H1 (cell line): ENCODE measurements at regions of chr7 and their contacts with region 1.

Region 1: GRCh38 chr7:71854546-71855397 is 557.4 kb downstream of the CALN1 start:
- DNase-seq: no peak
- H3K4me3 ChIP-seq: no peak overlapping the region
- H3K27ac ChIP-seq: no peak overlapping the region
- H3K4me1 ChIP-seq: no peaks in the 10 kb centered on the region; a peak in 1 of 7 replicates
- H3K27me3 ChIP-seq: no peaks in the 10 kb centered on the region; a peak in 1 of 7 replicates
- CTCF ChIP-seq: no peak
- EP300 ChIP-seq: no peak
- POLR2A ChIP-seq: no peak
- RAD21 ChIP-seq: no peak

Region 2: DNA sequence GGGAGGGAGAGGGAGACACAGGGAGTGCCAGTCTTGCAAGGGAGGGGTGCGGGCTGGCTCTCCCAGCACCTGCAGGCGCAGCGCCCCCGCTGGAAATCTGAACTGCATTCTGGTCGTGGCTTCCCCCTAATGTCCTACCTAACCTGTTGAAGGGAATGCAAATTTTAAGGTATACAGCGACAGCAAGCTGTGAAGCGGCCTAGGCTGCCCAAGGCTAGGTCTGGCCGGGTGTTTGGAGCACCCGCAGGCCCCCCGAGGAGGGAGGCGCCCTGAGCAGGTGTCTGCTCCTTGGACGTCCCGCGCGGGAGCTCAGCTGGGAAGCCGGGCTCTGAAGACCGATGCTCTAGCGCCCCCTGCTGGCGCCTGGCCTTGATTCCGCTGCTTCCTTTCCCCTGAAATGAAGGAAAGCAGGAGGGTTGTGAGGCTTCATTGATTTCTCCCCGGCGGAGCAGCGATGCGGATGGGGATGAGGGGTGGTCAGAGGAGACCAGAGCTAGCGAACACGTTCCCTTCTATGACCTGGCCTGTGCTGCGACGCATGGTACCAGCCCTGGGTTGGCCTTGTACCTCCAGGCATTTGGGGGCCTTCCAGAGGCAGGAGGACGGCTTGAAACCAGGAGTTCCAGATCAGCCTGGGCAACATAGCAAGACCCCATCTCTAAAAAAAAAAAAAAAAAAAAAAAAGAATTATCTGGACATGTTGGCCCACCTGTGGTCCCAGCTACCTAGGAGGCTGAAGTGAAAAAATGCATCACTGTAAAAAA is 121.5 kb before region 1 on chr7:
- CTCF ChIA-PET with region 1: no interaction called
- POLR2A ChIA-PET with region 1: no interaction called
- DNase-seq: peak; percentile 87 to 99
- H3K4me3 ChIP-seq: peak overlapping the region in 3 of 4 experiments; percentile 34 to 57 (median 53); a peak in 7 of 8 replicates
- H3K27ac ChIP-seq: no peak overlapping the region
- H3K4me1 ChIP-seq: peaks cover 0 to 4% (median 1%) of the 10 kb centered on the region in 4 experiments; a peak in 4 of 7 replicates
- H3K27me3 ChIP-seq: no peaks in the 10 kb centered on the region
- CTCF ChIP-seq: peak; percentile 83 to 85 (median 83)
- EP300 ChIP-seq: peak in 1 of 2 experiments; percentile 46; a peak in 1 of 3 replicates
- POLR2A ChIP-seq: no peak
- RAD21 ChIP-seq: peak; percentile 90 to 94

Region 3: GRCh38 chr7:71824006-71824760 is 30.6 kb before region 1 on chr7:
- CTCF ChIA-PET with region 1: no interaction called
- POLR2A ChIA-PET with region 1: no interaction called
- DNase-seq: no peak
- H3K4me3 ChIP-seq: no peak overlapping the region
- H3K27ac ChIP-seq: no peak overlapping the region
- H3K4me1 ChIP-seq: no peaks in the 10 kb centered on the region
- H3K27me3 ChIP-seq: no peaks in the 10 kb centered on the region
- CTCF ChIP-seq: no peak
- EP300 ChIP-seq: no peak
- POLR2A ChIP-seq: no peak
- RAD21 ChIP-seq: no peak

Region 4: DNA sequence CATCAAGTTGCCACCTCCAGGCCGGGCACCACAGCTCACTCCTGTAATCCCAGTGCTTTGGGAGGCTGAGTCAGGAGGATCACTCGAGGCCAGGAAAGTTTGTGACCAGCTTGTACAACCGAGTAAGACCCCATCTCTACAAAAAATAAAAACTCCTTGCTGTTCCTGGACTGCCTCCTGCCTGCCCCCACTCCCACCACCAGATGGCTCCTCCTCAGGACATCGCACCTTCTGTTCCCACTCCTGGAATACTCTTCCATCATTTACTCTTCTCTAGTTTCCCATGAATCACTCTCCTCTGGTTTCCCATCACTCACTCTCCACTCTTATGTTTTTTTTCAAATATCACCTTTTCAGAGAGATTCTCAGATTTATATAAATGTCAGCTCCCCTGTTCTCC is 16.7 kb after region 1 on chr7:
- CTCF ChIA-PET with region 1: interaction called, 19 read pairs
- POLR2A ChIA-PET with region 1: no interaction called
- DNase-seq: no peak
- H3K4me3 ChIP-seq: no peak overlapping the region
- H3K27ac ChIP-seq: no peak overlapping the region
- H3K4me1 ChIP-seq: no peaks in the 10 kb centered on the region
- H3K27me3 ChIP-seq: no peaks in the 10 kb centered on the region
- CTCF ChIP-seq: peak; percentile 39 to 69 (median 59)
- EP300 ChIP-seq: no peak
- POLR2A ChIP-seq: no peak
- RAD21 ChIP-seq: peak; percentile 32 to 45; a peak in 3 of 4 replicates

Region 5: DNA sequence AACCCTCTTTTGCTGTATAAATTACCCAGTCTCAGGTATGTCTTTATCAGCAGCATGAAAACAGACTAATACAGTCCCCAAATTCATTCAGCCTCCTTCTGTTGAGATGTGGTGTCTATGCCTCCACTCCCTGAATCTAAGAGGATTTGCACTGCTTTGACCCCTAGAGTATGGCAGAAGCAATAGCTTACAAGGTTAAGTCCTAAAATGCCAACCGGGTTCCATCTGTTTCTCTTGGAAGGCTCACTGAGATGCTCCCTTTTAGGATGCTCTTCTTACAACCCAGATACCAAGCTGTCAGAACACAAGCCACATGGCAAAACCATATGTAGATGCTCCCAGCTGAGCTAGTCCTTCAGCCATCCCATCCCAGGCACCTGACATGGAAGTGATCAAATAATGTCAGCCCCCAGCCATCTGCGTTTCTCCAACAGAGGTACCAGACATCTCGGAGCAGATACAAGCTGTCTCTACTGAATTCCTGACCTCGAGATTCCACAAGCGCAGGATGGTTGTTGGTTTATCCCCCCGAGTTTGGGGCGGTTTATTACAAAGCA is 537.1 kb after region 1 on chr7:
- CTCF ChIA-PET with region 1: no interaction called
- POLR2A ChIA-PET with region 1: no interaction called
- DNase-seq: peak in 1 of 2 experiments; percentile 1
- H3K4me3 ChIP-seq: no peak overlapping the region
- H3K27ac ChIP-seq: no peak overlapping the region
- H3K4me1 ChIP-seq: no peaks in the 10 kb centered on the region
- H3K27me3 ChIP-seq: no peaks in the 10 kb centered on the region
- CTCF ChIP-seq: no peak
- EP300 ChIP-seq: no peak
- POLR2A ChIP-seq: no peak
- RAD21 ChIP-seq: no peak